ENCODE measurements at regions of chr21 and their contacts with region 1.

Region 1: GRCh38 chr21:45973659-45974072 is 7.9 kb upstream of the COL6A1 start:
- DNase-seq: peak; percentile 91
- ATAC-seq: peak; percentile 50

Region 2: GRCh38 chr21:45910543-45911221 is 63.0 kb before region 1 on chr21:
- intact Hi-C with region 1: no loop called
- DNase-seq: peak; percentile 60
- ATAC-seq: peak; percentile 40

Region 3: GRCh38 chr21:46100426-46100825 is 126.8 kb after region 1 on chr21:
- intact Hi-C with region 1: loop called (anchors 10 kb)
- DNase-seq: no peak
- ATAC-seq: no peak

Region 4: DNA sequence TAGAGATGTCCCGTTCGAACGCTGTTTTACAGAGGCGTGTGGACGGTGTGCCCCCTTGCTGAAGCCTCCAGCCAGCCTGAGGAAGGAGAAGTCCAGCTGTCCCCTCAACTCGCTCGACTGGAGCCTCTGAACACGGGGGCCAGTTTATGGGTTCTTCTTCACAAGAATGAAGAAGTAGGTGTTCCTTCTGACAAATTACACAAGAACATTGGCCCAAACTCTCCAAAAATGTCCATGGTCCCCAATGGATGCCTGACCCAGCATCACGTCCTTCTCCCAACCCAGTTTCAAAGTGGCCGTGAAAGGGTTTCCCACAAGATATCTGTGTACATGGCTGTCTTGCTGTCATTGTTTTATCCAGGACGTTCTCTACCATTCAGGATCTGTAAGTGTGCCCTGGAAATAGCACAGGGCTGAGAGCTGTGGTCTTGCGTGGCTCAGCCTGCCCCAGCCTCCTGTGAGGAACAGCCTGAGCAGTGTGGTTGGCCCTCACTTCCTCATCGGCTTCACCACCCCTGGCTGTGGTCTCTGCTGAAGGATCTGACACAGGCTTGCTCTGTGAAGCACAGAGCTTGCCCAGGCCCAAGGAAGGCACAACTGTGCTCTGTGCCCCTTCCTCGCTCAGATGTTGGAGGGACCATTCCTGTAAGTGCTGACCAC is 632.2 kb after region 1 on chr21:
- intact Hi-C with region 1: no loop called
- DNase-seq: peak; percentile 53
- ATAC-seq: peak; percentile 80

Measured in left ventricle myocardium superior (tissue), 1 donor.